ENCODE measurements at regions of chr11 and their contacts with region 1.

Region 1: GRCh38 chr11:46006418-46007070 is 84.1 kb downstream of the LARGE2 start:
- DNase-seq: peak; percentile 66
- H3K4me3 ChIP-seq: no peak overlapping the region
- H3K27ac ChIP-seq: no peak overlapping the region
- H3K27me3 ChIP-seq: no peaks in the 10 kb centered on the region
- CTCF ChIP-seq: peak; percentile 81

Region 2: GRCh38 chr11:45993531-45994001 is 13.0 kb before region 1 on chr11:
- CTCF ChIA-PET with region 1: interaction called, 38 read pairs
- POLR2A ChIA-PET with region 1: no interaction called
- DNase-seq: no peak
- H3K4me3 ChIP-seq: no peak overlapping the region
- H3K27ac ChIP-seq: no peak overlapping the region
- H3K27me3 ChIP-seq: no peaks in the 10 kb centered on the region
- CTCF ChIP-seq: no peak

Region 3: GRCh38 chr11:46017341-46017740 is 10.8 kb after region 1 on chr11:
- CTCF ChIA-PET with region 1: interaction called, 22 read pairs
- POLR2A ChIA-PET with region 1: no interaction called
- DNase-seq: no peak
- H3K4me3 ChIP-seq: no peak overlapping the region
- H3K27ac ChIP-seq: no peak overlapping the region
- H3K27me3 ChIP-seq: no peaks in the 10 kb centered on the region
- CTCF ChIP-seq: no peak

Region 4: GRCh38 chr11:46200537-46201281 is 194.2 kb after region 1 on chr11:
- CTCF ChIA-PET with region 1: no interaction called
- POLR2A ChIA-PET with region 1: no interaction called
- DNase-seq: no peak
- H3K4me3 ChIP-seq: no peak overlapping the region
- H3K27ac ChIP-seq: no peak overlapping the region
- H3K27me3 ChIP-seq: peaks cover 35% of the 10 kb centered on the region
- CTCF ChIP-seq: no peak